Caco-2 (cell line): ENCODE measurements at regions of chr14 and their contacts with region 1.

Region 1: GRCh38 chr14:23929822-23930294 is 23.7 kb upstream of the DHRS4 start:
- DNase-seq: peak; percentile 67 to 85
- H3K4me3 ChIP-seq: no peak overlapping the region
- H3K4me3 Mint-ChIP-seq: no peak overlapping the region
- H3K27ac Mint-ChIP-seq: no peak overlapping the region
- H3K4me1 ChIP-seq: no peaks in the 10 kb centered on the region
- H3K4me1 Mint-ChIP-seq: no peaks in the 10 kb centered on the region
- H3K27me3 ChIP-seq: no peaks in the 10 kb centered on the region
- H3K27me3 Mint-ChIP-seq: peaks cover 11% of the 10 kb centered on the region
- CTCF ChIP-seq: peak; percentile 95 to 97

Region 2: DNA sequence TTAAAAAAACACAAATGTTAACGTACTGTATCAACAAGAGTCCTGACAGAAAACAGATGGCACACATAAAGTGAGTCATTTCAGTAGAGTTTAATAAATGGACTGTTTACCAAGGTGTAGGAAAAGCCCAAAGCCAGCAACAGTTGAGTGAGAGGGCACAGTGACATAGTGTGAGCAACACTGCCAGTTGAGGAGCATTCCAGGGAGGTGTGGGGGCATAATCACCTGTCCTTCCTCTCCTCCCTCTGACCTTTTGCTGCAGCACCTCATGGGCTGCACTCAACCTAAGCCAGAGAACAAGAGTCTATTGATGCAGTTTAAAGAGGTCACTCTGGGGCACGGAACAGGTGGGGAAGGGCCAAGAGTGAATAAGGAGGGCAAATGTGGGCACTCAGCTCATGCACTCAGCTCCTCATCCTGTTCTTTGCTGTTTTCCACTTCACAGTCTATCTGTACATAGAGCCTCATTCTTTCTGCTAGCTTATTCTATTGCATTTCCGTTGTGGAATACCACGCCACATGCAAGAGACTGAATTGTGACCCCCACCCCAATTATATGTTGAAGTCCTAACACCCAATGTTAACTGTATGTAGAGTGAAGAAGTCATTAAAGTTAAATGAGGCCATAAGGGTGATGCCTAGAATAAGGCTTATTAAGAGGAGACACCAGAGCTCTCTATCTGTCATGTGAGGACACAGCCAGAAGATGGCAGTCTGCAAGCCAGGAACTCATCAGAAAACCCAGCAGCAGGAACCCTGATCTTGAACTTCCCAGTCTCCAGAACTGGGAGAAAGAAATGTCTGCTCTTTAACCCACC is 264.3 kb before region 1 on chr14:
- CTCF ChIA-PET with region 1: no interaction called
- POLR2A ChIA-PET with region 1: no interaction called
- intact Hi-C with region 1: loop called (anchors 5 kb)
- DNase-seq: peak in 1 of 2 experiments; percentile 47
- H3K4me3 ChIP-seq: no peak overlapping the region
- H3K4me3 Mint-ChIP-seq: no peak overlapping the region
- H3K27ac Mint-ChIP-seq: no peak overlapping the region
- H3K4me1 ChIP-seq: no peaks in the 10 kb centered on the region
- H3K4me1 Mint-ChIP-seq: no peaks in the 10 kb centered on the region
- H3K27me3 ChIP-seq: no peaks in the 10 kb centered on the region
- H3K27me3 Mint-ChIP-seq: peaks cover 18% of the 10 kb centered on the region
- CTCF ChIP-seq: peak; percentile 22 to 63

Region 3: DNA sequence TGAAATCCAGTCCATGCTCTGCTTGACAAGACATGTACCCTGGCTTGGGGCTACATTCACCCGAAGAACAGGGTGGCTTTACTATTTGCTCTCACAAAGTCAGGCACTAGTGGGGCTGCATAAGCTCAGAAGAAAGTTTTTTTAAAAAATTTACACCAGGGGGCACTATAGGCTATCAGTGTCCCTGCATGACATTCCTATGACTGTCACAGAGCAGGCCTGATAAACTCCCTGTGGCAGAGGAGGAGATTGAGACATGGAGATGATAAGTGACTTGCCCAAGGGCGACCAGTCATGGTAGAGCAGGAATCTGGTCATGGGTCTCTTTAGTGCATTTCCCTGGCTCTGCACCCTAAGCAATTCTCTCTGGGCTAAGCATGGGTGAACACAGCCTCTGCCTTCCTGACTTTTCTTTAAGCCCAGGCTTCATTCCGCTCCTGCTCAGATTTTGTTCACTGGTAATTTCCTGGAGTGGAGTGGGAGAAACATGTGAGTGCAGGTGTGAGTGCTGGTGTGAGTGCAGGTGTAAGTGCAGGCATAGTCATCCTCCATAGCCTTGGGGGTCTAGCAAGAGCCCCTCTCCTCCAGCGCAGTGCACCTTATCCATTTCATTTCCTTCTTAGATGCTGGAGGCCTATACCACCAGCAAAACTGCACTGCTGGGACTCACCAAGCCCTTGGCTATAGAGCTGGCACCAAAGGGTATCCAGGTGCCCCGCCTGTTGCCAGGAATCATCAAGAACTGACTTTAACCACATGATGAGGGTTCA is 202.1 kb before region 1 on chr14:
- CTCF ChIA-PET with region 1: no interaction called
- POLR2A ChIA-PET with region 1: no interaction called
- intact Hi-C with region 1: loop called (anchors 1 kb)
- DNase-seq: peak; percentile 69 to 73
- H3K4me3 ChIP-seq: no peak overlapping the region
- H3K4me3 Mint-ChIP-seq: no peak overlapping the region
- H3K27ac Mint-ChIP-seq: no peak overlapping the region
- H3K4me1 ChIP-seq: no peaks in the 10 kb centered on the region
- H3K4me1 Mint-ChIP-seq: no peaks in the 10 kb centered on the region
- H3K27me3 ChIP-seq: no peaks in the 10 kb centered on the region; the same call in 1 of the 2 replicates
- H3K27me3 Mint-ChIP-seq: peaks cover 7% of the 10 kb centered on the region
- CTCF ChIP-seq: peak; percentile 55 to 72